GM10248 (cell line): ENCODE measurements at regions of chr10 and their contacts with region 1.

Region 1: DNA sequence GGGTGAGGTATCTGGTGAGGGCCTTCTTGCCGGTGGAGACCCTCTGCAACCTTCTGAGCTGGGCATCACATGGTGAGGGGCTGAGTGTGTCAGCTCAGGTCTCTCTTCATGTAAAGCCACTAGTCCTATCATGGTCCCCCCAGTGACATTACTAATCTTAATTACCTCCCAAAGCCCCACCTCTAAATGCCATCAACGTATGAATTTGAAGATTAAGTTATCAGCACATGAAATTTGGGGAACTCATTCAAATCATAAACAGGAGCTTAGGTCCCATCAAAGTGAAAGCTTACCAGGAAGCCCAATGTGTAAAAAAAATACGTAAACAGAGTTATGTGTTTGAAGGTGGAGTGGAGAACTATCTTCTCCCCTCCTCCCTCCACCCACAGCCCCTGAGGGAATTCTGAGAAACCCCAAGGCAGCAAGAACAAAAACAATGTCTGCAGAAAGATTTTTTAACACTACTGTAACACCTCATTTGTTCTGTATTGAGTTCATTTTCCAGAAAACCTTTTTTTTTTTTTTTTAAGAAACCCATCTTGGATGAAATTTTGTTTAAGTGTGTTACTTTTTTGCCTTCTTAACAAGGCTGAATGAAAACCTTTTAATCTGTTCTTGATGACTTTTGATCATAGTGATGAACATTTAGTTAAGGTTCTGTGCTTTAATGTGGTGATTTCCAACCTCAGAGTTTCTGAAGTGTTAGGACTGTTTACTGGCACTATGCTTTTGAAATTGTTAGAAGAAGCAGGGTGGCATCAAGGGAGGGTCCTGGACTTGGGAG is 19.1 kb upstream of the PCGF5 start:
- DNase-seq: no peak
- CTCF ChIP-seq: no peak

Region 2: DNA sequence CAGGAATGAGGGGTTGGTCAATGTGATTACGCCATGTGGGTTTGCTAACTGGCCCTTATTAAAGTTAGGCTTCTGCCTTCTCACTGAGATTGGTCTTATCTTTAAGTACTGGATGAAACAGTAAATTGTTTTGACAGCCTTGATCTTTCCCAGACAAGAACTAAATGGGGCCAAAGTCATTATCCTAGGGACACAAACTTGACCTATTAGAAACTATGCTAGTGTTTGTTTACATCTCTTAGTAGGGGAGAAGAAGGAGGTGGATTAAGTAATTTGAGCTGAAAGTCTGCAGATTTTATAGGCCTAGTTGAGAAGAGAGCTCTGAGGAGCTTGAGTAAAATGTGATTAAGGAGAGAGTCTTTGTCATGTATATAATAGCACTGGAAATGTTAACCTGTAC is 730.4 kb before region 1 on chr10:
- CTCF ChIA-PET with region 1: no interaction called
- POLR2A ChIA-PET with region 1: no interaction called
- DNase-seq: no peak
- CTCF ChIP-seq: no peak

Region 3: DNA sequence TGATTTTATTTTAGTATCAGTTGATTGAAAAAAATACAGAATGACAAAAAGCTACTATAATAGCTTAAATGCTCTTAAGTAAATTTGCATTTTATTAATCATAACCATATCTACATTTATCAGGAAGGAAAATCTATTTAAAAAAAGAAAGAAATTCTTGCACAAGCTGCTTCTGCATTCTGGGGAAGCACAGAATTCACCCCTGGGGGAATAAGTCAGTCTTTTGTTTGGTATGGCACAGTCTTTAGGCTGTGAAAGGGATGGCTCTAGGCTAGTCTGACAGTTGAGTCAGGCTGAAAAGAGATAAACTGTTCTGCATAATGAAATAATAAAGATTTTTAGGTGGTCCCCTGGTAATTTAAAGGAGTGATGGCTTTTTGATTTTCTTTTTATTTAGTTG is 381.5 kb before region 1 on chr10:
- CTCF ChIA-PET with region 1: no interaction called
- POLR2A ChIA-PET with region 1: no interaction called
- DNase-seq: no peak
- CTCF ChIP-seq: no peak

Region 4: DNA sequence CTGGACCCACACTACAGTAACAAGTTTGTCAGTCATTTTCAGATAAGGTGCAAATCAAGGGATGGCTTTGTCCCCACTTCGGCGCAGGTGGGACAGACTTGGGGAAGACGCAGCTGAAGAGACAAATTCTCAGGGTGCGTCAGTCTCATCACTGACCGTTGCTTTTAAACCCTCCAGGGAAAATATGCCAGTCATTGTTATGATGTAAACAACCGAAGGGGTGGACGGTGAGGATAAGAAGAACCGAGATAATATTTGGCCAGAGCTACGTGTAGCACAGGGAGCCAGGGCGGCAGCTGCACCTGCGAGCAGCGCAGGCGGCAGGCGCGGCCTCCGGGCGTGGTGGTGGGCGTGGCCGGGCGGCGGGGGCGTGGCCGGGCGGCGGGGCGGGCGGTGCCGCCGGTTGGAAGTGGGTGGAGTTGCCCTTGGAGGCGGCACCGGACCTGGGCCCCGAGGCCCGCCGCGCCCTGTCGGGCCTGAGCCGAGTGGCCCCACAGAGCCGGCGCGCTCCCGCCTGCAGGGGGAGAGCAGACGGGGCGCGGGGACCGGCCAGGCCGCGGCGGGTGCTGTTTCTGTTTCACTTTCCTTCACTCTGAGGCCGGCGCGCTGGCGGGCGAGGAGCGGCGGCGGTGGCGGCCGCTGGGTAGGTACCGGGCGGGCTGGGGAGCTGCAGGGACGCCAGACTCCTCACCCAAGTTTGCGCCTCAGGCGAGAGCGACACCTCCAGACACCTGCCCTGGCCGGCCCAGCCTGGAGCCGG is 19.0 kb after region 1 on chr10 and contains the start of gene PCGF5:
- CTCF ChIA-PET with region 1: interaction called, 15 read pairs
- POLR2A ChIA-PET with region 1: no interaction called
- DNase-seq: peak; percentile 96
- CTCF ChIP-seq: peak; percentile 34